Heart left ventricle (tissue), 16 donors: ENCODE measurements at regions of chr10 and their contacts with region 1.

Region 1: GRCh38 chr10:52779541-52780390 is 7.2 kb upstream of the MBL2 start:
- DNase-seq: peak; percentile 27 to 77 (median 43)
- ATAC-seq: peak in 3 of 4 donors; percentile 63 to 82 (median 81)
- H3K4me3 ChIP-seq: no peak overlapping the region
- H3K27ac ChIP-seq: no peak overlapping the region
- H3K4me1 ChIP-seq: peaks cover 0 to 5% (median 0%) of the 10 kb centered on the region in 12 donors
- H3K27me3 ChIP-seq: peaks cover 0 to 19% (median 9%) of the 10 kb centered on the region in 9 donors
- CTCF ChIP-seq: peak; percentile 69 to 86 (median 80)
- POLR2A ChIP-seq: no peak

Region 2: GRCh38 chr10:52644373-52645186 is 135.2 kb before region 1 on chr10:
- intact Hi-C with region 1: loop called in 3 of 10 experiments (anchors 2 to 5 kb)
- DNase-seq: peak in 3 of 5 donors; percentile 10 to 42 (median 21)
- ATAC-seq: peak in 3 of 4 donors; percentile 67 to 72 (median 70)
- H3K4me3 ChIP-seq: no peak overlapping the region
- H3K27ac ChIP-seq: no peak overlapping the region
- H3K4me1 ChIP-seq: peaks cover 0 to 3% (median 0%) of the 10 kb centered on the region in 12 donors
- H3K27me3 ChIP-seq: no peaks in the 10 kb centered on the region
- CTCF ChIP-seq: peak; percentile 53 to 81 (median 66)
- POLR2A ChIP-seq: no peak

Region 3: GRCh38 chr10:52740913-52741675 is 38.7 kb before region 1 on chr10:
- intact Hi-C with region 1: loop called in 6 of 10 experiments (anchors 2 to 5 kb)
- DNase-seq: no peak
- ATAC-seq: peak in 1 of 4 donors; percentile 14
- H3K4me3 ChIP-seq: no peak overlapping the region
- H3K27ac ChIP-seq: no peak overlapping the region
- H3K4me1 ChIP-seq: no peaks in the 10 kb centered on the region
- H3K27me3 ChIP-seq: no peaks in the 10 kb centered on the region
- CTCF ChIP-seq: peak; percentile 48 to 82 (median 71)
- POLR2A ChIP-seq: no peak

Region 4: GRCh38 chr10:53737132-53737531 is 957.4 kb after region 1 on chr10:
- intact Hi-C with region 1: no loop called
- DNase-seq: no peak
- ATAC-seq: no peak
- H3K4me3 ChIP-seq: no peak overlapping the region
- H3K27ac ChIP-seq: no peak overlapping the region
- H3K4me1 ChIP-seq: no peaks in the 10 kb centered on the region
- H3K27me3 ChIP-seq: no peaks in the 10 kb centered on the region
- CTCF ChIP-seq: no peak
- POLR2A ChIP-seq: no peak